CD4-positive, alpha-beta T cell (primary cell): ENCODE measurements at regions of chr19 and their contacts with region 1.

Region 1: GRCh38 chr19:36573020-36573885 is at the start of gene ZNF529:
- DNase-seq: peak; percentile 69 to 94 (median 78)
- ATAC-seq: peak; percentile 92
- H3K4me3 ChIP-seq: peak within 1 kb of the TSS; percentile 88
- H3K4me3 Mint-ChIP-seq: peak within 1 kb of the TSS; percentile 94
- H3K27ac ChIP-seq: peak within 1 kb of the TSS; percentile 89 to 97
- H3K27ac Mint-ChIP-seq: peak within 1 kb of the TSS; percentile 93
- H3K4me1 ChIP-seq: peaks cover 25% of the 10 kb centered on the region
- H3K4me1 Mint-ChIP-seq: peaks cover 39% of the 10 kb centered on the region
- H3K27me3 ChIP-seq: no peaks in the 10 kb centered on the region
- H3K27me3 Mint-ChIP-seq: no peaks in the 10 kb centered on the region
- CTCF ChIP-seq: no peak
- total RNA-seq, gene ZNF529: 39.6 to 42.7 TPM

Region 2: DNA sequence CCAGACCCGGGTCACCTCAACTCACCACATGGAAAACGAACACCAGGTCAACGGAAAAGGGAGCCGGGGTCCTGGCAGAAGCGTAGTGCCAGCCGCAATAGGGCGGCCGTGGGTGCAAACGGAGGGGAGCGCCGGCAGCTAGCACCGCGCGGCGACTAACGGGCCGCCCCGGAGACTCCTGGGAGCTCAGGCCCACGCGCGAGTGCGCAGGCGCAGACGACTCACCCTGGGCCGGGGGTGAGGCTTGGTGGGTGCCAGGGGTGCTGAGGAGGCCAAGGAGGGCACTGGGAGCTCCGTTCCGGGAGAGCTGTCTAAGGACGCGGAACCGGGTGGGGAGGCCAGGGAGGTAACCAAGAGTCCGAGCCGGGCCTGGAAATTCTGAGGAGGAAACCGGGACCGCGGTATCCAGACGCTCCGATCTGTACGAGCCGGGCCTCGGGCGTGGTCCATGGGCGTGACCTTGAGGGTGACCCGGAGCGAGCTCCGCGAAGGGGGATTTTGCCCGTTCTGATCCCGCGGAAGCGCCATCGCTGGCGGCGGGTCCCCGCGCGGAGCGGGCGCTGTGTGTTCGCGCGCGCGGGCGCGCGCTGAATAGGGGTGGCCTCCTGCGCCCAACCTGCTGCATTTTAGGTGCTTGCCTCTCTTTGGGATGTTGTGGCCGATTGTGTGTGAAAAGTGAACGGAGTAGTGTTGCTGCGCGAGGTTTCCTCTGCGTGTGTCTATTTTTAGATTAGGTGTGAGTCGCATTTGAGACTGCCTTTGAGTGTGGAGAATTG is 32.0 kb after region 1 on chr19 and contains the start of gene ZNF382:
- CTCF ChIA-PET with region 1: interaction called, 3 read pairs
- POLR2A ChIA-PET with region 1: interaction called, 42 read pairs
- intact Hi-C with region 1: loop called (anchors 1 to 2 kb)
- DNase-seq: peak; percentile 74 to 92 (median 85)
- ATAC-seq: peak; percentile 75
- H3K4me3 ChIP-seq: peak within 1 kb of the TSS; percentile 87
- H3K4me3 Mint-ChIP-seq: peak within 1 kb of the TSS; percentile 85
- H3K27ac ChIP-seq: peak within 1 kb of the TSS; percentile 92 to 95
- H3K27ac Mint-ChIP-seq: peak within 1 kb of the TSS; percentile 83
- H3K4me1 ChIP-seq: peaks cover 10% of the 10 kb centered on the region
- H3K4me1 Mint-ChIP-seq: peaks cover 28% of the 10 kb centered on the region
- H3K27me3 ChIP-seq: no peaks in the 10 kb centered on the region
- H3K27me3 Mint-ChIP-seq: no peaks in the 10 kb centered on the region
- CTCF ChIP-seq: no peak
- total RNA-seq, gene ZNF382: 4.2 to 4.4 TPM

Region 3: GRCh38 chr19:37217855-37218591 is 644.8 kb after region 1 on chr19 and contains the start of gene ZNF383:
- CTCF ChIA-PET with region 1: no interaction called
- POLR2A ChIA-PET with region 1: no interaction called
- intact Hi-C with region 1: loop called in 1 of 2 experiments (anchors 5 kb)
- DNase-seq: peak; percentile 66 to 90 (median 78)
- ATAC-seq: peak; percentile 81
- H3K4me3 ChIP-seq: peak within 1 kb of the TSS; percentile 94
- H3K4me3 Mint-ChIP-seq: peak within 1 kb of the TSS; percentile 93
- H3K27ac ChIP-seq: peak within 1 kb of the TSS; percentile 81 to 90
- H3K27ac Mint-ChIP-seq: peak within 1 kb of the TSS; percentile 89
- H3K4me1 ChIP-seq: peaks cover 14% of the 10 kb centered on the region
- H3K4me1 Mint-ChIP-seq: peaks cover 42% of the 10 kb centered on the region
- H3K27me3 ChIP-seq: no peaks in the 10 kb centered on the region
- H3K27me3 Mint-ChIP-seq: no peaks in the 10 kb centered on the region
- CTCF ChIP-seq: no peak
- total RNA-seq, gene ZNF383: 13.1 to 15.7 TPM